Aorta (tissue), 5 donors: ENCODE measurements at regions of chr7 and their contacts with region 1.

Region 1: GRCh38 chr7:992709-993607 is 10.0 kb downstream of the CYP2W1 start:
- DNase-seq: peak; percentile 99 to 100
- ATAC-seq: peak; percentile 96
- H3K4me3 ChIP-seq: no peak overlapping the region
- H3K27ac ChIP-seq: no peak overlapping the region
- H3K4me1 ChIP-seq: no peaks in the 10 kb centered on the region
- H3K27me3 ChIP-seq: no peaks in the 10 kb centered on the region

Region 2: DNA sequence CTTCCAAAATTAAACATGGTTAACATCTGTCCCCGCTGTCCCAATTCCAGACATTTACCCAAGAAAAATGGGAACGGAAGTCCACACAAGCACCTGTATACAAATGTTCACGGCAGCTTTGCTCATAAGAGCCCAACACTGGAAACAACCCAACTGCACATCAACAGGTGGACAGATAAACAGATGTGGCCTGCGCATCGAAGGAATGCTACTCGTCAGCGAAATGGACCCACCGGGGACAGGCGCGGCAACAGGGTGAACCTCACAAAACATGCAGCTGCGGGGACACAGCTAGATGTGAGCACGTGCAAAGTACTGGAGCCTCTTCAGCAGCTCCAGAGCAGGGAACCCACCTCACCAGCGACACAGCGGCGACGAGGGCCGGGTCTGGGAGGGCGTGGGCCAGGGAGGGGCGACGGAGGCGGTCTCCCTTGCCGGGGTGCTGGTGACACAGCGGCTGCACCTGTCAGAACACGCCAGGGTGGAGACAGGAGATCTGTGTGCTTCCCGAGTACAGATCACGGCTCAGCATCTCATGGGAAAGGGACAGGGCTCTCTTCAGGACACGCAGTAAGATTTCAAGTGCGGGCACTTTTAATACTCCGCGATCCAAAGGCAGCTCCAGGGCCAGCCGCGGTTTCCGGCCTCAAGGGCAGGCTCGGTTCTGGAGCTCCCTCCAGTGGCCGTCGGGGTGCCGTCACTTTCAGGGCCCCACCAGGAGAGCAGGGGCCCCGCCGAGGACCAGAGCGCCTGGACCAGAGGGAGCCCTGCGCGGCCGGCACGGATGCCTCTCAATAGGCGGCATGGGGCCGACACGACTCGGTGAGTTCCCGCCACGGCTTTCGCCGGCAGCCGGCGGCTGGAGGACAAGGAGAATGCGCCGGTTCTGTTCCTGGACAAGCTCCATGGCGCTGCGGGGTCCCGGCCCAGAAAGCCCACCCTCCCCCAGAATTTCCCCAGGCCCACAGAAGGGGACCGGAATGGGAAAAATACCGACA is 72.6 kb after region 1 on chr7:
- intact Hi-C with region 1: loop called (anchors 1 kb)
- DNase-seq: peak; percentile 88 to 96
- ATAC-seq: peak; percentile 93
- H3K4me3 ChIP-seq: no peak overlapping the region
- H3K27ac ChIP-seq: no peak overlapping the region
- H3K4me1 ChIP-seq: no peaks in the 10 kb centered on the region
- H3K27me3 ChIP-seq: no peaks in the 10 kb centered on the region